ENCODE measurements at regions of chr20 and their contacts with region 1.

Region 1: GRCh38 chr20:12337607-12338006 is 419.9 kb downstream of the BTBD3 start:
- DNase-seq: no peak
- ATAC-seq: no peak
- H3K4me3 ChIP-seq: no peak overlapping the region
- H3K4me3 Mint-ChIP-seq: no peak overlapping the region
- H3K27ac ChIP-seq: no peak overlapping the region
- H3K27ac Mint-ChIP-seq: no peak overlapping the region
- H3K4me1 ChIP-seq: no peaks in the 10 kb centered on the region
- H3K4me1 Mint-ChIP-seq: no peaks in the 10 kb centered on the region
- H3K27me3 ChIP-seq: no peaks in the 10 kb centered on the region
- H3K27me3 Mint-ChIP-seq: no peaks in the 10 kb centered on the region
- CTCF ChIP-seq: no peak

Region 2: GRCh38 chr20:11935212-11936154 is 402.1 kb before region 1 on chr20:
- intact Hi-C with region 1: no loop called
- DNase-seq: no peak
- ATAC-seq: peak in 1 of 3 donors; percentile 35
- H3K4me3 ChIP-seq: no peak overlapping the region
- H3K4me3 Mint-ChIP-seq: no peak overlapping the region
- H3K27ac ChIP-seq: no peak overlapping the region
- H3K27ac Mint-ChIP-seq: no peak overlapping the region
- H3K4me1 ChIP-seq: peaks cover 4% of the 10 kb centered on the region
- H3K4me1 Mint-ChIP-seq: peaks cover 0 to 6% of the 10 kb centered on the region in 2 donors
- H3K27me3 ChIP-seq: no peaks in the 10 kb centered on the region
- H3K27me3 Mint-ChIP-seq: no peaks in the 10 kb centered on the region
- CTCF ChIP-seq: no peak

Region 3: GRCh38 chr20:12327205-12327604 is 10.4 kb before region 1 on chr20:
- intact Hi-C with region 1: no loop called
- DNase-seq: no peak
- ATAC-seq: no peak
- H3K4me3 ChIP-seq: no peak overlapping the region
- H3K4me3 Mint-ChIP-seq: no peak overlapping the region
- H3K27ac ChIP-seq: no peak overlapping the region
- H3K27ac Mint-ChIP-seq: no peak overlapping the region
- H3K4me1 ChIP-seq: no peaks in the 10 kb centered on the region
- H3K4me1 Mint-ChIP-seq: no peaks in the 10 kb centered on the region
- H3K27me3 ChIP-seq: no peaks in the 10 kb centered on the region
- H3K27me3 Mint-ChIP-seq: no peaks in the 10 kb centered on the region
- CTCF ChIP-seq: no peak

Region 4: GRCh38 chr20:12386821-12387220 is 49.2 kb after region 1 on chr20:
- intact Hi-C with region 1: loop called (anchors 5 kb)
- DNase-seq: no peak
- ATAC-seq: no peak
- H3K4me3 ChIP-seq: no peak overlapping the region
- H3K4me3 Mint-ChIP-seq: no peak overlapping the region
- H3K27ac ChIP-seq: no peak overlapping the region
- H3K27ac Mint-ChIP-seq: no peak overlapping the region
- H3K4me1 ChIP-seq: no peaks in the 10 kb centered on the region
- H3K4me1 Mint-ChIP-seq: no peaks in the 10 kb centered on the region
- H3K27me3 ChIP-seq: no peaks in the 10 kb centered on the region
- H3K27me3 Mint-ChIP-seq: no peaks in the 10 kb centered on the region
- CTCF ChIP-seq: no peak

Region 5: GRCh38 chr20:13082374-13082773 is 744.8 kb after region 1 on chr20:
- intact Hi-C with region 1: no loop called
- DNase-seq: no peak
- ATAC-seq: no peak
- H3K4me3 ChIP-seq: no peak overlapping the region
- H3K4me3 Mint-ChIP-seq: no peak overlapping the region
- H3K27ac ChIP-seq: no peak overlapping the region
- H3K27ac Mint-ChIP-seq: no peak overlapping the region
- H3K4me1 ChIP-seq: no peaks in the 10 kb centered on the region
- H3K4me1 Mint-ChIP-seq: no peaks in the 10 kb centered on the region
- H3K27me3 ChIP-seq: no peaks in the 10 kb centered on the region
- H3K27me3 Mint-ChIP-seq: no peaks in the 10 kb centered on the region
- CTCF ChIP-seq: no peak